Colonic mucosa (tissue), 4 donors: ENCODE measurements at regions of chr12 and their contacts with region 1.

Region 1: DNA sequence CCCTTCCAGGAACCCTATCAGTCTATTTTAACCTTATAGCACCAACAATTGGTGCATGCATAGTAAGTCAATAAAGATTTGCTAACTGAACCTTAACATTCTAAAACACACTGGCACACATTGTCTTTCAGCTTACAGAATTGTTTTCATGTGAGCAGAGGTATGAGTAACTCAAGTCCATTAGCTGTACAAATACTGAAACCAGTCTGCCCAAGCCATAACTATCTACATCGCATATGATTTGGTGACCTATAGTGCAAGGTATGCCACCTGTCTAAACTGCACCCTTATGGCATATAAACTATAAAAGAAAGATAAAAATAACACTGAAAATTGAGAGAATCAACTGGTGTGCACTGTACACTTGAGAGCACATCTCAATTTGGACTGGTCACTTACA is 34.8 kb downstream of the SBNO1 start:
- DNase-seq: no peak
- H3K4me3 ChIP-seq: no peak overlapping the region
- H3K27ac ChIP-seq: no peak overlapping the region
- H3K4me1 ChIP-seq: no peaks in the 10 kb centered on the region
- H3K27me3 ChIP-seq: no peaks in the 10 kb centered on the region
- CTCF ChIP-seq: no peak

Region 2: GRCh38 chr12:123293178-123293760 is 36.5 kb before region 1 on chr12:
- intact Hi-C with region 1: loop called (anchors 5 kb)
- DNase-seq: no peak
- H3K4me3 ChIP-seq: no peak overlapping the region
- H3K27ac ChIP-seq: no peak overlapping the region
- H3K4me1 ChIP-seq: no peaks in the 10 kb centered on the region
- H3K27me3 ChIP-seq: no peaks in the 10 kb centered on the region
- CTCF ChIP-seq: no peak

Region 3: DNA sequence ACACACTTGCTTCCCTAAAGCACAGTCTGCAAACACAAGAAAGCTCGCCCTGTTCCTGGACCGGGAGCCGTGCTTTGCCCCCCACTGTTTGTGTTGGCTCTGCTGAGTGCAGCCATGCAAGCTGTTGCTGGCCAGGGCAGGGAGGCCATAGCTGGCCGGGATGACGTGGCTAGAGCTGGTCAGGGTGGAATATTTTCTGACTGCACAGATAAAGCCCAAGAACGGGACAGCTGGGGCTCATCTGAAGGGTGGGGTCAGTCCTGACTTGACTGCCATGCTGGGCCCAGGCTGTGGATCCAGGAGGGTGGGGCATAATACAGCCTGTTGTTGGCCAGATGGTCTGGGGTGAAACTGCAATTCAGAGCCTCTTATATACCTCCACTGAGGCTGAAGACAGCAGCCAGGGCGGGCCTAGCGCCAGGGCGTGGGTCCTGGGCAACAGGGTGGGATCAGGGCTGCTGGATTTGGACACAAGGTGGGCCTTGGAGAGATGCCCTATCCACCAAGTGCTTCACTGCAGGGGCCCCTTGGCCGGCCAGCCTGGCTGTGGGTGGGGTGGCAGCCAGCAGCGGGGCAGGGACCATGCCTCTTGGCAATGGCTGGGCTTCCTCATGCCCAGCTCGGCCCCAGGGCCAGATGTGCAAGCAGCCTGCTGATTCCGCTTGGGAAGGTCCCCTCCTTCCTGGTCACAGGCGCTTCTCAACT is 68.9 kb after region 1 on chr12:
- intact Hi-C with region 1: no loop called
- DNase-seq: peak; percentile 48
- H3K4me3 ChIP-seq: no peak overlapping the region
- H3K27ac ChIP-seq: peak overlapping the region; percentile 50
- H3K4me1 ChIP-seq: no peaks in the 10 kb centered on the region
- H3K27me3 ChIP-seq: no peaks in the 10 kb centered on the region
- CTCF ChIP-seq: no peak

Region 4: DNA sequence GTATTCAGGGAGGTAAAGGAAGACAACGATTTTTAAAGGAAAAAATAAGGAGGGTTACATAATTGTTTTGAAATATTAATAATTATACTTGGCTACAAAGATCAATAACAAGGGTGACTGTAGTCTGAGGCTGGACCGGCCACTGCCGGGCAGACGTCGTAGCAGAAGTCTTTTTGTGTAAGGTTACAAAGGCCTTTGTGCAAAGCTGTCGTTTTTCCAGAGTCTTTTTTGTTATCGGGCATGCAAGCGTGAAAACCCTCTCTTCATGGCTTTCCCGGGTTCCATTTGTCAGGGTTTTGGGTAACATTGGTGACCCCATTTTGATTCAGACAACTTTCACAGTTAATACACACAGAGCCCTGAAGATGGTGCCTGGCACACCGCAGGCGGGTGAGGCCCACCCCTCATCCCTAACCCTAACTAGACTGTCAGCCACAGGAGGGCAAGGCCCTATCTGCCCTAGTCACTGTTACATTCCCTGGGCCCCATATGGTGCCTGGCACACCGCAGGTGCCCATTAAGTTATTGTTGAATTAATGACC is 172.4 kb after region 1 on chr12:
- intact Hi-C with region 1: no loop called
- DNase-seq: no peak
- H3K4me3 ChIP-seq: no peak overlapping the region
- H3K27ac ChIP-seq: no peak overlapping the region
- H3K4me1 ChIP-seq: no peaks in the 10 kb centered on the region
- H3K27me3 ChIP-seq: no peaks in the 10 kb centered on the region
- CTCF ChIP-seq: no peak